ENCODE measurements at regions of chr4 and their contacts with region 1.

Region 1: DNA sequence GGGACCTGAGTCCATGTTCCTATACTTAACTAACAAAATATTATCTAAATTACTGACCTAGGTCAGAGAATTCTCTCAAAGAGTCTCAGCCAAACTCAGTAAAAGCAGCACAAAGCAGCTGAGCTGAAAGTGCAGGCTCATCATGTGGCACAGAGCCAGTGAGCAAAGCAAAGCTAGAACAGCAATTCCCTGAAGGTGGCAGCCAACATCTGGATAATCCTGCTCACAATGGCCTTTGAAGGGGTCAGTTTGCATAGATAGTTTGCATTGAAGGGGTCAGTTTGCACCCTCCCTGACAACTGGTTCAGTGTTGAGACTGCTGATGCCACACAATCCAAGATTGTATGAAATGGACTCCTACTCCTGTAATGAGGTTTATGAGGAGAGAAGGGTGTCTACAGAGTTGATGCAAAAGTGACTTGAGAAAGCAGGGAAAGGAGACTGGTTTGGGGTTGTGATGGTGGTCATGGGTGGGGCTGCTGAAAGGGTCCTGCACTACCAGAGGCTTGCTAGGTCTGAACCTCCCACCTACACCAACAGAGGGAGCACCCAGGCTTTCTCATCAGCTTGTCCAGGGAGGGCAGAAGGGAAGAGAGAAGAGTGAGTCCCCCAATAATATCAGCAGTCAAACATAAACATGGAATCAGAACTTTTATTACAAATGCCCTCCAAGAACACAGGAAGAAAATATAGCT is 39.7 kb downstream of the TRIM61 start:
- DNase-seq: no peak
- H3K4me3 ChIP-seq: no peak overlapping the region
- H3K27ac ChIP-seq: no peak overlapping the region
- H3K4me1 ChIP-seq: no peaks in the 10 kb centered on the region; a peak in 1 of 7 replicates
- H3K27me3 ChIP-seq: no peaks in the 10 kb centered on the region
- CTCF ChIP-seq: peak; percentile 44 to 67 (median 57)
- EP300 ChIP-seq: no peak
- POLR2A ChIP-seq: no peak
- RAD21 ChIP-seq: peak; percentile 56 to 58

Region 2: GRCh38 chr4:164337219-164337944 is 600.3 kb before region 1 on chr4:
- CTCF ChIA-PET with region 1: no interaction called
- POLR2A ChIA-PET with region 1: no interaction called
- DNase-seq: no peak
- H3K4me3 ChIP-seq: no peak overlapping the region
- H3K27ac ChIP-seq: no peak overlapping the region
- H3K4me1 ChIP-seq: no peaks in the 10 kb centered on the region
- H3K27me3 ChIP-seq: no peaks in the 10 kb centered on the region
- CTCF ChIP-seq: no peak
- EP300 ChIP-seq: no peak
- POLR2A ChIP-seq: no peak
- RAD21 ChIP-seq: no peak

Region 3: DNA sequence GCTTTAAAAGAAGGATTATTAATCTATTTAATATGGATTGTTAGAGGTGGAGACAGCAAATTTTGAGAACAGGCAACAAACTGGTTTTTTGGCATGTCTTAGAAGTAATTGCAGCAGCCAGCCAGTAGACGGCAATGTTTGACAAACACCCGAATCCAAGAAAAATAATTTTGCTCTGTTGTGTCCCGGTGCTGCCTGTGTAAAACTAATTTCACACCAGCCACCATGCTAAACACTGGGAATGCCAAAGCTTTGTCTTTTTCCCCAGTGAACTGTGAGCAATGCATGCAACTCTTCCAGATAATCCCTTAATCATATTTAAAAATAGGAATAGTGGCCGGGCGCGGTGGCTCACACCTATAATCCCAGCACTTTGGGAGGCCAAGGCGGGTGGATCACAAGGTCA is 157.9 kb before region 1 on chr4:
- CTCF ChIA-PET with region 1: interaction called, 37 read pairs
- POLR2A ChIA-PET with region 1: no interaction called
- DNase-seq: peak; percentile 10 to 64
- H3K4me3 ChIP-seq: no peak overlapping the region
- H3K27ac ChIP-seq: no peak overlapping the region
- H3K4me1 ChIP-seq: peaks cover 0 to 3% (median 0%) of the 10 kb centered on the region in 4 experiments; a peak in 2 of 7 replicates
- H3K27me3 ChIP-seq: no peaks in the 10 kb centered on the region
- CTCF ChIP-seq: peak in 2 of 3 experiments; percentile 90 to 91; a peak in 3 of 4 replicates
- EP300 ChIP-seq: no peak
- POLR2A ChIP-seq: no peak
- RAD21 ChIP-seq: peak; percentile 94 to 97

Region 4: DNA sequence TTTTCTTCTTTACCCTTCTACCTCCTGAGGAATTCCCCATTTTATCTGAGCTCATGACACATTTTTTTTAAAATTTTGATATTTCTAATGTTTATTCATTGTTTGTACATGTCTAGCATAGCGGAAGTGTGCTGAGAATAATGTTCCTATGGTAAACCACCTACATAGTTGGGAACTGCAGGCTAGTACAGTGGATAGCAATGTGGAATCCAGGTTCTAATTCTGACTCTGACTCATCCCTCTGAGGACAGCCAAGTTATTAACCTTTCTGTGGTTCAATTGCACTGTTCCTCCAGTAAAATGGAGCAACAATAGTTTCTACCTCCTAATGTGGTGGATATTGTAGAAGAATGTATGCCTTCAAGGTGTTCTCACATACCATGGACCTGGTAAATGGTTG is 81.3 kb before region 1 on chr4:
- CTCF ChIA-PET with region 1: no interaction called
- POLR2A ChIA-PET with region 1: no interaction called
- DNase-seq: no peak
- H3K4me3 ChIP-seq: no peak overlapping the region
- H3K27ac ChIP-seq: no peak overlapping the region
- H3K4me1 ChIP-seq: no peaks in the 10 kb centered on the region
- H3K27me3 ChIP-seq: no peaks in the 10 kb centered on the region
- CTCF ChIP-seq: no peak
- EP300 ChIP-seq: no peak
- POLR2A ChIP-seq: no peak
- RAD21 ChIP-seq: no peak

Region 5: GRCh38 chr4:164926301-164926700 is 11.4 kb before region 1 on chr4:
- CTCF ChIA-PET with region 1: interaction called, 21 read pairs
- POLR2A ChIA-PET with region 1: no interaction called
- DNase-seq: no peak
- H3K4me3 ChIP-seq: no peak overlapping the region
- H3K27ac ChIP-seq: no peak overlapping the region
- H3K4me1 ChIP-seq: no peaks in the 10 kb centered on the region
- H3K27me3 ChIP-seq: no peaks in the 10 kb centered on the region
- CTCF ChIP-seq: no peak
- EP300 ChIP-seq: no peak
- POLR2A ChIP-seq: no peak
- RAD21 ChIP-seq: no peak

Region 6: DNA sequence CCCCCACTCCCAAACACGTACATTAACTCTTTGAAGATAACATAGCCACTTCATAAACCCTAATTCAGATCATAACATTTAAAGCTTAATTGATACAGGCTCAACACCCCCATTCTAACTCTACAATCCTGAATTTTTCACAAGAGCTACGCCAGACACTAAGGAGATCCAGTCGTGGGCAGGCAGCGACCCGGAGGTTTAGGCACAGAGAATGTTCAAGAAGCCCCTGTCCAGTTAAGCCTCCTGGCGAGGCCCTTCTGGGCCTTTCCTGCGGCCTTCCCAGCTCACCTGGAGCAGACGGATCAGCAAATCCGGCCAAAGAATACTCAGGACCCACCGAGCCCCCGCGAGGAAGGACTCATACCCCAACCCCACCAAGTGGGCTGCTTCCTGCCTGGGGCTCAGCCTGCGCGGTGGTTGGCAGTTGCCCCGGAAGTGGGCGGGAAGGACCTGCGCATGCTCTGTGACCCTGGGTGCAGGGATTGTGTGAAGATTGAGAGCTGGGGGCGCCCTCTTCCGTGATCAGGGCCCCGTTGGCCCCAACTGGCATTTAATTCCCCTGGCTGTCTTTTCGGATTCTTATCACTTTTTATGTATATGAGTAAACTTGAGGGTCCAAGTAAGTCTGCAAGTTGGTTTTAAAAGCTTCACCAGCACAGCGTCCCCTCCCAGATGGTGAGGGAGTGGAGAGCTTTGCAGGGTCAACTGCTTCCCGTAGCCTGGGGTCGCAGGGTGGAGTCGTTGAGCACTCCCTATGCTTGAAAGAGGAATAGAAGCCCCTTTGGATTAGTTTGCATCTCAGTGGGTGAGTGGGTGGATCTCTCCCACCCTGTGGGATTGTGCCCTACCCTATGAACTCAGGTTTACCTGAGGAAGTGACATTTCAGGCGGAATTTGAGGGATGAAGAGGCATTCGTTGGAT is 39.8 kb after region 1 on chr4 and contains the start of gene TRIM61:
- CTCF ChIA-PET with region 1: interaction called, 15 read pairs
- POLR2A ChIA-PET with region 1: no interaction called
- DNase-seq: peak in 1 of 2 experiments; percentile 83
- H3K4me3 ChIP-seq: peak within 1 kb of the TSS in 2 of 4 experiments; percentile 28 to 72; a peak in 3 of 8 replicates
- H3K27ac ChIP-seq: no peak within 1 kb of the TSS
- H3K4me1 ChIP-seq: no peaks in the 10 kb centered on the region
- H3K27me3 ChIP-seq: no peaks in the 10 kb centered on the region
- CTCF ChIP-seq: no peak
- EP300 ChIP-seq: no peak
- POLR2A ChIP-seq: no peak
- RAD21 ChIP-seq: no peak
- total RNA-seq, gene TRIM61: 4.1 and 5.0 TPM in 2 replicates

Region 7: DNA sequence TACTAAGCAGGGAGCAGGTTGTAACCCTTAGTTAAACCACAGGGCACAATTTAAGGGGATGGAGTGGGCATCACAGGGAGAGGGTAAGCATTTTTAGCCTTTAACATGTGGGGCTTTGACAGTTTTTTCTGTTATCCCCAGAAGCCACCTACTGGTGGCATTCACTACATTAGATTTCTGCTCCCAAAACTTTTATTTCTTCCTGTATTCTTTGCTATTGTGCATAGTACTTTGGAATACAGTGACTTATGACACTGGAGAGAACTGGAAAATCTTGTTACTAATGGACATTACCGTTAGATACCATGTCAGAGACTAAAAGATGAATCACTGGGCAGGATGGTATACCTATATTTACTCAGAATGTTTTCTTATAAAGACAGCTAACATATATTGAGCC is 123.2 kb after region 1 on chr4:
- CTCF ChIA-PET with region 1: interaction called, 10 read pairs
- POLR2A ChIA-PET with region 1: no interaction called
- DNase-seq: no peak
- H3K4me3 ChIP-seq: no peak overlapping the region
- H3K27ac ChIP-seq: no peak overlapping the region
- H3K4me1 ChIP-seq: no peaks in the 10 kb centered on the region
- H3K27me3 ChIP-seq: no peaks in the 10 kb centered on the region
- CTCF ChIP-seq: peak in 2 of 3 experiments; percentile 15 to 17; a peak in 2 of 4 replicates
- EP300 ChIP-seq: no peak
- POLR2A ChIP-seq: no peak
- RAD21 ChIP-seq: peak; percentile 36 to 44; a peak in 3 of 4 replicates

Region 8: GRCh38 chr4:165167650-165168049 is 229.9 kb after region 1 on chr4:
- CTCF ChIA-PET with region 1: no interaction called
- POLR2A ChIA-PET with region 1: no interaction called
- DNase-seq: no peak
- H3K4me3 ChIP-seq: no peak overlapping the region
- H3K27ac ChIP-seq: no peak overlapping the region
- H3K4me1 ChIP-seq: no peaks in the 10 kb centered on the region
- H3K27me3 ChIP-seq: no peaks in the 10 kb centered on the region
- CTCF ChIP-seq: no peak
- EP300 ChIP-seq: no peak
- POLR2A ChIP-seq: no peak
- RAD21 ChIP-seq: no peak